Calu3 (cell line): ENCODE measurements at regions of chrX and their contacts with region 1.

Region 1: GRCh38 chrX:12080265-12080664 is 58.0 kb upstream of the FRMPD4 start:
- DNase-seq: peak; percentile 27
- H3K4me3 Mint-ChIP-seq: no peak overlapping the region
- H3K27ac Mint-ChIP-seq: no peak overlapping the region
- H3K4me1 Mint-ChIP-seq: peaks cover 8% of the 10 kb centered on the region
- H3K27me3 Mint-ChIP-seq: no peaks in the 10 kb centered on the region
- CTCF ChIP-seq: peak; percentile 50

Region 2: DNA sequence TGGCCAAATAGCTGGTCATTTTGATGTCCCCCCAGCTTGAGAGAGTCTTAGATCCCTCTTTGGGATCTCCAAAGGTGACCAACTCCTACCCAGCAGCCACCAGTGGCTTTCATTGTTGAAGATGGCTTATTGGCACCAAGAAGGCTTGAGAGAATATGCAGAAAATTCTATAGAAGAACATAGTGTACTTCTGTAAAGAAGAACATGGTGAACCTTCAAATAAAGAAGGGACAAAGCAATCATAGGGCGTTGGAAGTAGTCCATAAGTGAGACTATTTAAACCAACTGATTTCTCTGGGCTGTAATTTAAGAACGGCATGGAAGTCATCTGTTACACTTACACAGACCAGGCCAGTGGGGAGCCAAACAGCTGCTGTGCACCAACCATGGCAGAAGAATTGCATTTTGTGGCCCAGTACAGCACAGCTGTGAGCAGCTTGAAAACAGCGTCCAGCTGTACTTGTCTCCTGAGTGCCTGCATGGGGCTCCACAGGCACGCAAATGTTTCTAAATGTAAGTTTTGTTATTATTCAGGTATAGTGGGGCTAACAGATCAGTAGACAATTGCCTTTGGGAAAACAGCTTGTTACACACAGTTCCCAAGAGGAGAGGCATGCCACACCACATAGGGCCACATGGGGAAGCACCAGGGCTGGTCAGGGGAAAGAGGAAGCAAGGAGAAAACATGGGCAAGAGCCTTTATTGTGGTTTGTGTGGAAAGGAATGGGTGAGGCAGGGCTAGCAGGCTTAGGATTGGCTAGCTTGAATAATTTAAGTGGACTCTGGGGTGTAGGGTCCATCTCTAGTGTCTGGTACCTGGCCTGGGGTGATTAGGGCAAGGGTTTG is 539.5 kb before region 1 on chrX:
- CTCF ChIA-PET with region 1: no interaction called
- intact Hi-C with region 1: no loop called
- DNase-seq: no peak
- H3K4me3 Mint-ChIP-seq: no peak overlapping the region
- H3K27ac Mint-ChIP-seq: no peak overlapping the region
- H3K4me1 Mint-ChIP-seq: no peaks in the 10 kb centered on the region
- H3K27me3 Mint-ChIP-seq: peaks cover 17% of the 10 kb centered on the region
- CTCF ChIP-seq: no peak

Region 3: DNA sequence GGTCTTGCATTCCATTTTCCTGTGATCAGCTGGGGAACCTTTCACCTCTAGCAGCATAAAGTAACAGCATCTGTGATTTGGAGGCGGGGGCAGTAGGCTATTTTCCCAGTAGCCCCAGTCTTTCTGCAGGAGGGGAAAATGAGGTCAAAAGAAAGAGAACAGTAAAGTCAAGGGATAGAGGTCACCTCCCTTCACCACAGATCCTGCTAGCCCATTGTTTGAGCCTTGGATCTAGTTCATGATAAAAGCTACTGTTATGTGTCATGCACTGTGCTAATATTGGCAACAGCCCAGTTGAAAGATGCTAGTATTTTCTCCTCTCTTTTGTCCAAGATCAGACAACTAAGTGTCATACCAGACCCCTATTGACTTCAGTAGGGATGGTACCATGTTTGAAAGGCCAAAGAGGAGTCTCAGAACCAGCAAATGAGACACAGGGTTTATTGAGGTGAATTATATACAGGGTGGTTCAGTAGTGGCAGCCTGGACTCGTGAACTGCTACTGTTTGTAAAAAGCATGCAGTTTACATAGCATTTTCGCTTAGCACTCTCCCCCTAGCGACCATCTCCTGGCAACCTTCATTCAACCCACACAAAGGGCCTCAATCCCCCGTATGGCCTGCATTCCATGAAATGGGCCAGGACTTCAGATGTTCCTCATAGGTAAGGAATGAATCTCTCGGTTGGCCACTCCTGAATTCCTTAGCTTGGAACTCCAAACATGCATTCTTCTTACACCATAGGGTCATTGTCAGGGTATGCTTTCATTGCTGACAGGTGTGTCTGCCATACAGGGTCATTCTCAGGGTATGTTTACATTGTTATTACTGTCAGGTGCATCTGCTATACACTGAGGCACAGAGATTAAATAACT is 112.0 kb before region 1 on chrX:
- CTCF ChIA-PET with region 1: no interaction called
- intact Hi-C with region 1: loop called (anchors 10 kb)
- DNase-seq: peak; percentile 66
- H3K4me3 Mint-ChIP-seq: peak overlapping the region; percentile 24
- H3K27ac Mint-ChIP-seq: peak overlapping the region; percentile 83
- H3K4me1 Mint-ChIP-seq: peaks cover 53% of the 10 kb centered on the region
- H3K27me3 Mint-ChIP-seq: no peaks in the 10 kb centered on the region
- CTCF ChIP-seq: no peak

Region 4: GRCh38 chrX:12058087-12058486 is 22.2 kb before region 1 on chrX:
- CTCF ChIA-PET with region 1: no interaction called
- intact Hi-C with region 1: no loop called
- DNase-seq: no peak
- H3K4me3 Mint-ChIP-seq: no peak overlapping the region
- H3K27ac Mint-ChIP-seq: no peak overlapping the region
- H3K4me1 Mint-ChIP-seq: no peaks in the 10 kb centered on the region
- H3K27me3 Mint-ChIP-seq: no peaks in the 10 kb centered on the region
- CTCF ChIP-seq: no peak

Region 5: DNA sequence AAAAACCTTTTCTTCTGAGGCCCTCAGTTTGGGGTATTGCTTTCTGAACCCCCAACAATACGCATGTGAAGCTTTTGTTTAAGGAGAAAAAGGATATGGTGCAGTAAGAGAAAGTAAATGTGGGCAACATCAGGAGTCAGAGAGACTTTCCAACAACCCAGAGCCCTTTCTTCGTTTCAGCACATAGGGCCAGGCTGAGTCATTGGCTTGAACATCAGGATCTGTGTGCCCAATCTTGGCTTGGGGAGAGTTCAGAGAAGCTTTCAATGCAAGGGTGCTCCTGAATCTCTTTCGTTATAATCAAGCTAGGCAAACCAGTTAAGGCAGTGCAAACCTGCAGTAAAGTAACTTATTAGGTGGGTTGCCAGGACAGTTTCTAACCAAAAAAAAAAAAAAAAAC is 249.2 kb after region 1 on chrX:
- CTCF ChIA-PET with region 1: no interaction called
- intact Hi-C with region 1: loop called (anchors 10 kb)
- DNase-seq: no peak
- H3K4me3 Mint-ChIP-seq: no peak overlapping the region
- H3K27ac Mint-ChIP-seq: no peak overlapping the region
- H3K4me1 Mint-ChIP-seq: no peaks in the 10 kb centered on the region
- H3K27me3 Mint-ChIP-seq: no peaks in the 10 kb centered on the region
- CTCF ChIP-seq: no peak

Region 6: GRCh38 chrX:12567857-12568256 is 487.6 kb after region 1 on chrX:
- CTCF ChIA-PET with region 1: no interaction called
- intact Hi-C with region 1: loop called (anchors 10 kb)
- DNase-seq: peak; percentile 16
- H3K4me3 Mint-ChIP-seq: no peak overlapping the region
- H3K27ac Mint-ChIP-seq: no peak overlapping the region
- H3K4me1 Mint-ChIP-seq: peaks cover 6% of the 10 kb centered on the region
- H3K27me3 Mint-ChIP-seq: no peaks in the 10 kb centered on the region
- CTCF ChIP-seq: peak; percentile 19

Region 7: GRCh38 chrX:12771445-12772069 is 691.3 kb after region 1 on chrX:
- CTCF ChIA-PET with region 1: interaction called, 4 read pairs
- intact Hi-C with region 1: loop called (anchors 10 kb)
- DNase-seq: peak; percentile 79
- H3K4me3 Mint-ChIP-seq: peak overlapping the region; percentile 31
- H3K27ac Mint-ChIP-seq: no peak overlapping the region
- H3K4me1 Mint-ChIP-seq: no peaks in the 10 kb centered on the region
- H3K27me3 Mint-ChIP-seq: peaks cover 12% of the 10 kb centered on the region
- CTCF ChIP-seq: peak; percentile 88

Region 8: DNA sequence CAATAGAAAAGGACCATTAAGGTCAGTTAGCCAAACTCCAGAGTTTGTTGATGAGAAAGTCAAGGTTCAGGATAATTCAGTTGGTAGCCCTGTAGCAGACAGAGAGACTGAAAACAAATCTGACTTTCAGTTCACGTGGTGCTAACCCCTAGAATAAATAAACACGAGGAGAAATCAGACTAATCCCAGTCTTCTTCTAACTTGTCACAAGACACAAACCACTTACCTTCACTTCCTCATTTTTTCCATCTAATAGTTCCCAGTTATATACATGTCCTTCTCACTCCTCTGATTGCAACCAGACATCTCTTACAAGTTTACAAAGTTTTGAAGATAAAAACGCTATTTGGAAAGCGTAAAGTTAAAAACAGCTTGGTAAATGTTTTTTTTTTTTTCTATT is 794.3 kb after region 1 on chrX:
- CTCF ChIA-PET with region 1: no interaction called
- intact Hi-C with region 1: no loop called
- DNase-seq: no peak
- H3K4me3 Mint-ChIP-seq: no peak overlapping the region
- H3K27ac Mint-ChIP-seq: no peak overlapping the region
- H3K4me1 Mint-ChIP-seq: no peaks in the 10 kb centered on the region
- H3K27me3 Mint-ChIP-seq: no peaks in the 10 kb centered on the region
- CTCF ChIP-seq: no peak